ENCODE measurements at regions of chr16 and their contacts with region 1.

Region 1: DNA sequence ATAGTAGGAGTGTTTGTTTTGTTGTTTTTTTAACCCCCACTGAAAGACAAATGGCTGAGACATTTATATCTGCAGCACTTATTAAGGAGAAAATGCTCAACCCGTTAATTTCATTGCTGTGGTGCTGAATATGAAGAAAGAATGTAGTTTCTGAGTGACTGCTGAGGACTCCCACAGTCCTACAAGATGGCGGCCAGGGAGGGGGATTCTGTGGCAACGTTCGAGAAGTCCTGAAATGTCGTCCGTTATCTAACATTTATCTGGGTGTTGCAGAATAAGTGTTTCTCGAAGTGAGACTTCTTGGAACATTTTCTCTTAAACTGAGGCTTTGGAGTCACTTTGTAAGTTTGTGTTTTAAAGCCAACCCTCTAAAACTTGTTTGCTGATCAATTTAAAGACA is 530.4 kb downstream of the XYLT1 start:
- DNase-seq: no peak
- H3K4me3 ChIP-seq: no peak overlapping the region
- H3K27ac ChIP-seq: no peak overlapping the region
- H3K4me1 ChIP-seq: no peaks in the 10 kb centered on the region
- H3K27me3 ChIP-seq: peaks cover 37% of the 10 kb centered on the region
- CTCF ChIP-seq: no peak
- EP300 ChIP-seq: no peak
- POLR2A ChIP-seq: no peak

Region 2: GRCh38 chr16:16881814-16882213 is 58.5 kb before region 1 on chr16:
- in situ Hi-C with region 1: loop called in 1 of 4 experiments (anchors 10 kb)
- intact Hi-C with region 1: no loop called
- DNase-seq: no peak
- H3K4me3 ChIP-seq: no peak overlapping the region
- H3K27ac ChIP-seq: no peak overlapping the region
- H3K4me1 ChIP-seq: no peaks in the 10 kb centered on the region
- H3K27me3 ChIP-seq: peaks cover 10% of the 10 kb centered on the region
- CTCF ChIP-seq: no peak
- EP300 ChIP-seq: no peak
- POLR2A ChIP-seq: no peak

Measured in transverse colon (tissue), 4 donors.